B cell (primary cell): ENCODE measurements at regions of chr16 and their contacts with region 1.

Region 1: GRCh38 chr16:71723537-71724319 is 773 bp downstream of the PHLPP2 start:
- DNase-seq: peak; percentile 94
- ATAC-seq: peak; percentile 83
- H3K4me3 ChIP-seq: peak overlapping the region; percentile 21 to 80 (median 74)
- H3K4me3 Mint-ChIP-seq: peak overlapping the region; percentile 99
- H3K27ac ChIP-seq: peak overlapping the region; percentile 52 to 85
- H3K27ac Mint-ChIP-seq: peak overlapping the region; percentile 95
- H3K4me1 ChIP-seq: peaks cover 46 to 48% of the 10 kb centered on the region in 2 donors
- H3K4me1 Mint-ChIP-seq: peaks cover 48% of the 10 kb centered on the region
- H3K27me3 ChIP-seq: no peaks in the 10 kb centered on the region
- H3K27me3 Mint-ChIP-seq: no peaks in the 10 kb centered on the region
- CTCF ChIP-seq: peak; percentile 18

Region 2: DNA sequence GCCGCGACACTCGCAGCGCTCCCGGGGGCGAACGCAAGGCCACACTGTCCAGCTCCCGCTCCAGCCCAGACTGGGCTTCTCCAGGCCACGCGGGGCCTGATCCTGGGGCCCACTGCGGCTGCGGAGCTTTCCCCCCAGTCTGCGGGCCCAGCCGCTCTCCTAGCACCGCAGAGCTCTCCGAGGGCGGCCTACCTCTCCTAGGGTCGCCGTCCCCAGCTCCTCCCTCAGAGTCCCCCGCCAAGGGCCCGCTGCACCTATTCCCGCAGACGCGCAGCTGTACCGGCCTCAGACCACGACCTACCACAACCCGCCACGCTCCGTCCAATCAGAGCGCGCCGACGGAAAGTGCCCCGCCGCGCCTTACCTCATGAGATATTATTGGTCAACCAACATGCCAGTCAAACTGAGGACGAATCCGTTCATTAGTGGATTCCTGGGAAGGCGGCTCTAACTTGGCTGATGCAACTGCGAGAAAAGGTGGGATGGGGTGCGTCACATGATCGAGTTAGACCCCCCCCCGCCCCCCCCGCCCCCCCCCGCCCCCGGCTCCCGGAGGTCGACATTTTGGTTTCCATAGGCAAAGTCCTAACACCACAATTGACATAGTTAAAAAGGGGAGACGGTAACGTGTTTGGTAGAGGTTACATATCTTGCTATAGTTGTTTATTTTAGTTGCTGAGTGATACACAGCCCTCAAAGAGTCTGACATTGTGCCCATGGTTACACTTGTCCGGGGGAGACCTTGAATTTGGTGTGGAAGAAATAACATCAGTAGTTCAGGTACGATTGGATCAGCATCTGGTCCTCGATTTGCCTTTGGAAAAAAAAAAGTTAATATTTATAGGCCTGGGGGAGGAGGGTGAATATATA is 1434.3 kb before region 1 on chr16 and contains the start of gene AARS1:
- CTCF ChIA-PET with region 1: no interaction called
- POLR2A ChIA-PET with region 1: no interaction called
- intact Hi-C with region 1: no loop called
- DNase-seq: peak; percentile 98
- ATAC-seq: peak; percentile 97
- H3K4me3 ChIP-seq: peak within 1 kb of the TSS; percentile 80 to 91 (median 86)
- H3K4me3 Mint-ChIP-seq: peak within 1 kb of the TSS; percentile 99
- H3K27ac ChIP-seq: peak within 1 kb of the TSS; percentile 79 to 90
- H3K27ac Mint-ChIP-seq: peak within 1 kb of the TSS; percentile 96
- H3K4me1 ChIP-seq: peaks cover 0 to 16% of the 10 kb centered on the region in 2 donors
- H3K4me1 Mint-ChIP-seq: peaks cover 15% of the 10 kb centered on the region
- H3K27me3 ChIP-seq: no peaks in the 10 kb centered on the region
- H3K27me3 Mint-ChIP-seq: no peaks in the 10 kb centered on the region
- CTCF ChIP-seq: no peak
- total RNA-seq, gene AARS1: 54.4 and 57.8 TPM in 2 replicates

Region 3: GRCh38 chr16:70800781-70801530 is 922.8 kb before region 1 on chr16 and contains the start of gene VAC14:
- CTCF ChIA-PET with region 1: no interaction called
- POLR2A ChIA-PET with region 1: no interaction called
- intact Hi-C with region 1: loop called (anchors 5 kb)
- DNase-seq: peak; percentile 97
- ATAC-seq: peak; percentile 98
- H3K4me3 ChIP-seq: peak within 1 kb of the TSS; percentile 38 to 86 (median 66)
- H3K4me3 Mint-ChIP-seq: peak within 1 kb of the TSS; percentile 98
- H3K27ac ChIP-seq: peak within 1 kb of the TSS; percentile 69 to 90
- H3K27ac Mint-ChIP-seq: peak within 1 kb of the TSS; percentile 96
- H3K4me1 ChIP-seq: peaks cover 16 to 21% of the 10 kb centered on the region in 2 donors
- H3K4me1 Mint-ChIP-seq: peaks cover 36% of the 10 kb centered on the region
- H3K27me3 ChIP-seq: peaks cover 0 to 6% (median 0%) of the 10 kb centered on the region in 4 experiments
- H3K27me3 Mint-ChIP-seq: no peaks in the 10 kb centered on the region
- CTCF ChIP-seq: no peak
- total RNA-seq, gene VAC14: 59.7 and 64.7 TPM in 2 replicates

Region 4: GRCh38 chr16:71484006-71484893 is 239.5 kb before region 1 on chr16:
- CTCF ChIA-PET with region 1: no interaction called
- POLR2A ChIA-PET with region 1: no interaction called
- intact Hi-C with region 1: loop called (anchors 1 kb)
- DNase-seq: peak; percentile 95
- ATAC-seq: peak; percentile 85
- H3K4me3 ChIP-seq: peak overlapping the region; percentile 57 to 96 (median 89)
- H3K4me3 Mint-ChIP-seq: peak overlapping the region; percentile 89
- H3K27ac ChIP-seq: peak overlapping the region; percentile 99 to 100
- H3K27ac Mint-ChIP-seq: peak overlapping the region; percentile 93
- H3K4me1 ChIP-seq: peaks cover 9 to 12% of the 10 kb centered on the region in 2 donors
- H3K4me1 Mint-ChIP-seq: peaks cover 15% of the 10 kb centered on the region
- H3K27me3 ChIP-seq: no peaks in the 10 kb centered on the region
- H3K27me3 Mint-ChIP-seq: peaks cover 7% of the 10 kb centered on the region
- CTCF ChIP-seq: no peak

Region 5: GRCh38 chr16:71808593-71809459 is 85.1 kb after region 1 on chr16 and contains the start of gene AP1G1:
- CTCF ChIA-PET with region 1: no interaction called
- POLR2A ChIA-PET with region 1: interaction called, 5 read pairs
- intact Hi-C with region 1: loop called (anchors 1 kb)
- DNase-seq: peak; percentile 99
- ATAC-seq: peak; percentile 89
- H3K4me3 ChIP-seq: peak within 1 kb of the TSS; percentile 87 to 99 (median 96)
- H3K4me3 Mint-ChIP-seq: peak within 1 kb of the TSS; percentile 99
- H3K27ac ChIP-seq: peak within 1 kb of the TSS; percentile 96 to 99
- H3K27ac Mint-ChIP-seq: peak within 1 kb of the TSS; percentile 100
- H3K4me1 ChIP-seq: peaks cover 20 to 27% of the 10 kb centered on the region in 2 donors
- H3K4me1 Mint-ChIP-seq: peaks cover 30% of the 10 kb centered on the region
- H3K27me3 ChIP-seq: no peaks in the 10 kb centered on the region
- H3K27me3 Mint-ChIP-seq: no peaks in the 10 kb centered on the region
- CTCF ChIP-seq: no peak
- total RNA-seq, gene AP1G1: 142 and 159 TPM in 2 replicates

Region 6: GRCh38 chr16:71883849-71884638 is 160.3 kb after region 1 on chr16 and contains the start of gene ZNF821:
- CTCF ChIA-PET with region 1: interaction called, 11 read pairs
- POLR2A ChIA-PET with region 1: interaction called, 3 read pairs
- intact Hi-C with region 1: loop called (anchors 2 kb)
- DNase-seq: peak; percentile 89
- ATAC-seq: peak; percentile 69
- H3K4me3 ChIP-seq: peak within 1 kb of the TSS; percentile 76 to 98 (median 86)
- H3K4me3 Mint-ChIP-seq: peak within 1 kb of the TSS; percentile 96
- H3K27ac ChIP-seq: peak within 1 kb of the TSS; percentile 89 to 91
- H3K27ac Mint-ChIP-seq: peak within 1 kb of the TSS; percentile 96
- H3K4me1 ChIP-seq: peaks cover 33 to 43% of the 10 kb centered on the region in 2 donors
- H3K4me1 Mint-ChIP-seq: peaks cover 43% of the 10 kb centered on the region
- H3K27me3 ChIP-seq: no peaks in the 10 kb centered on the region
- H3K27me3 Mint-ChIP-seq: no peaks in the 10 kb centered on the region
- CTCF ChIP-seq: peak; percentile 66
- total RNA-seq, gene ZNF821: 31.2 and 35.6 TPM in 2 replicates

Region 7: DNA sequence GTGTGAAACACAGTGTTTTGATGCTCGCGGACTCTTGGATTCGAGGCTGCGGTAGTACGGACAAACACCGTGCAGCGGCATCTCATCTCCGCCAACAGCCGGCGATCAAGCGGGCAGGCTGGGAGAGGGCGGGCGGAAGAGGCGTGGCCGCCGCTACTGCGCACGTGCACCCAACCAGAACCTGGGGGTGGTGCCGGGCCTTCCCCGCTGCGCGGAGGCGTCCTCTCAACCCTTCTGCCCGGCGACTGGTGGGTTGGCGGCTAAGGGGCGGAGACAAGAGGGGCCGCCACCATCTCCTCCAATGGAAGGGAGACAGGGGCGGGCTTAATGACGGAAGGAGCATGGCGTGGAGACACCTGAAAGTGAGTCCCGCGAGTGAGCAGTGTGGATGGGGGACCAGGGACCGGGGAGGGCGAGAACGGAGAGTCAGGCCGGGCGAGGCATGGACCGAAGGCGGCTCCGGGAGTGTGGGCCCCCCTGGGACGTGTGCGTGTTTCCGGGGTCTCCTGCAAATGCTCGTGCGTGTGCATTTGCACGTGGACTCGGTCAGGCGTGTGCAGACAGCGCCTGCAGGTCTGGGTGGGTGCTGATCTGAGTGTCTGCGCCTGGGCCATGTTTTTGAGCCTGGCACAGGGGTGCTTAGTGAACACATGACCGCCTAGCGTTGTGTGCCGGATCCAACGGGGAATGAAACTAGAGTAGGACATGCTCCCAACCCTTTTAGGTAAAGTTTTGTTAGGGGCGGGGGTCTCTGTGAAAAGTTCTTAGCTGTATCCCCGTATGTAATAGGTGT is 284.9 kb after region 1 on chr16 and contains the start of gene DHODH:
- CTCF ChIA-PET with region 1: no interaction called
- POLR2A ChIA-PET with region 1: no interaction called
- intact Hi-C with region 1: loop called (anchors 1 kb)
- DNase-seq: peak; percentile 99
- ATAC-seq: peak; percentile 98
- H3K4me3 ChIP-seq: peak within 1 kb of the TSS; percentile 56 to 96 (median 66)
- H3K4me3 Mint-ChIP-seq: peak within 1 kb of the TSS; percentile 95
- H3K27ac ChIP-seq: peak within 1 kb of the TSS; percentile 73 to 85
- H3K27ac Mint-ChIP-seq: peak within 1 kb of the TSS; percentile 94
- H3K4me1 ChIP-seq: peaks cover 0 to 12% of the 10 kb centered on the region in 2 donors
- H3K4me1 Mint-ChIP-seq: peaks cover 16% of the 10 kb centered on the region
- H3K27me3 ChIP-seq: no peaks in the 10 kb centered on the region
- H3K27me3 Mint-ChIP-seq: peaks cover 4% of the 10 kb centered on the region
- CTCF ChIP-seq: no peak
- total RNA-seq, gene DHODH: 11.3 and 14.7 TPM in 2 replicates